ENCODE measurements at regions of chr1 and their contacts with region 1.

Region 1: GRCh38 chr1:24830680-24831272 is 85.5 kb downstream of the CLIC4 start:
- DNase-seq: peak; percentile 64
- H3K4me3 Mint-ChIP-seq: no peak overlapping the region
- H3K27ac Mint-ChIP-seq: no peak overlapping the region
- H3K4me1 Mint-ChIP-seq: peaks cover 19% of the 10 kb centered on the region
- H3K27me3 Mint-ChIP-seq: no peaks in the 10 kb centered on the region
- CTCF ChIP-seq: peak; percentile 78

Region 2: GRCh38 chr1:24642481-24643361 is 188.1 kb before region 1 on chr1 and contains the start of gene SRRM1:
- CTCF ChIA-PET with region 1: interaction called, 3 read pairs
- POLR2A ChIA-PET with region 1: interaction called, 4 read pairs
- intact Hi-C with region 1: loop called (anchors 5 kb)
- DNase-seq: peak; percentile 100
- H3K4me3 Mint-ChIP-seq: peak within 1 kb of the TSS; percentile 98
- H3K27ac Mint-ChIP-seq: peak within 1 kb of the TSS; percentile 99
- H3K4me1 Mint-ChIP-seq: peaks cover 25% of the 10 kb centered on the region
- H3K27me3 Mint-ChIP-seq: no peaks in the 10 kb centered on the region
- CTCF ChIP-seq: no peak
- total RNA-seq, gene SRRM1: 154 and 171 TPM in 2 replicates

Region 3: DNA sequence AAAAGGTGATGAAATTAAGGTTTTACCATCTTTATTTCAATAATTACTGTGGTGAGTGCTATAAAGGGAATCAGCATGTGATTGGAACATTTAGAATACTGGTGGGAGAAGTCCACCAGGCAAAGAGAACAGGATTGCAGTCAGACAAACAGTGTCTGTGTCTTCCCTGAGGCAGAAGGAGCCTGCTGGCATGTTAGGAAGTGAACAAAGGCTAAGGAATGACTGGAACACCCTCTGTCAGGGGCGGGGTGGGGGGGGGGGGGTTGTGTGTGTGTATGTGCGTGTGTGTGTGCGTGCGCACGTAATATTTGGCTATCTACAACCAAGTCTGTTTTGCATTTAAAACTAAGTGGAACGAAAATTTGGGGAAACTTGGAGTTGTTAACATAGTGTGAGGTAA is 157.4 kb before region 1 on chr1:
- CTCF ChIA-PET with region 1: interaction called, 12 read pairs
- POLR2A ChIA-PET with region 1: interaction called, 4 read pairs
- intact Hi-C with region 1: no loop called
- DNase-seq: no peak
- H3K4me3 Mint-ChIP-seq: no peak overlapping the region
- H3K27ac Mint-ChIP-seq: peak overlapping the region; percentile 70
- H3K4me1 Mint-ChIP-seq: peaks cover 9% of the 10 kb centered on the region
- H3K27me3 Mint-ChIP-seq: no peaks in the 10 kb centered on the region
- CTCF ChIP-seq: no peak

Region 4: GRCh38 chr1:24688621-24689195 is 142.1 kb before region 1 on chr1:
- CTCF ChIA-PET with region 1: interaction called, 208 read pairs
- POLR2A ChIA-PET with region 1: interaction called, 15 read pairs
- intact Hi-C with region 1: loop called (anchors 2 kb)
- DNase-seq: peak; percentile 80
- H3K4me3 Mint-ChIP-seq: no peak overlapping the region
- H3K27ac Mint-ChIP-seq: peak overlapping the region; percentile 13
- H3K4me1 Mint-ChIP-seq: peaks cover 9% of the 10 kb centered on the region
- H3K27me3 Mint-ChIP-seq: no peaks in the 10 kb centered on the region
- CTCF ChIP-seq: peak; percentile 87

Region 5: GRCh38 chr1:24694380-24694843 is 136.4 kb before region 1 on chr1:
- CTCF ChIA-PET with region 1: interaction called, 208 read pairs
- POLR2A ChIA-PET with region 1: interaction called, 15 read pairs
- intact Hi-C with region 1: loop called (anchors 2 kb)
- DNase-seq: no peak
- H3K4me3 Mint-ChIP-seq: no peak overlapping the region
- H3K27ac Mint-ChIP-seq: no peak overlapping the region
- H3K4me1 Mint-ChIP-seq: no peaks in the 10 kb centered on the region
- H3K27me3 Mint-ChIP-seq: no peaks in the 10 kb centered on the region
- CTCF ChIP-seq: no peak

Measured in MCF 10A (cell line).